Activated naive CD4-positive, alpha-beta T cell treated with anti-CD3 and anti-CD28 coated beads, Interleukin-2, amount 10 ng/mL, durations not matched to agents 7 days and 5 days (primary cell): ENCODE measurements at regions of chr12 and their contacts with region 1.

Region 1: DNA sequence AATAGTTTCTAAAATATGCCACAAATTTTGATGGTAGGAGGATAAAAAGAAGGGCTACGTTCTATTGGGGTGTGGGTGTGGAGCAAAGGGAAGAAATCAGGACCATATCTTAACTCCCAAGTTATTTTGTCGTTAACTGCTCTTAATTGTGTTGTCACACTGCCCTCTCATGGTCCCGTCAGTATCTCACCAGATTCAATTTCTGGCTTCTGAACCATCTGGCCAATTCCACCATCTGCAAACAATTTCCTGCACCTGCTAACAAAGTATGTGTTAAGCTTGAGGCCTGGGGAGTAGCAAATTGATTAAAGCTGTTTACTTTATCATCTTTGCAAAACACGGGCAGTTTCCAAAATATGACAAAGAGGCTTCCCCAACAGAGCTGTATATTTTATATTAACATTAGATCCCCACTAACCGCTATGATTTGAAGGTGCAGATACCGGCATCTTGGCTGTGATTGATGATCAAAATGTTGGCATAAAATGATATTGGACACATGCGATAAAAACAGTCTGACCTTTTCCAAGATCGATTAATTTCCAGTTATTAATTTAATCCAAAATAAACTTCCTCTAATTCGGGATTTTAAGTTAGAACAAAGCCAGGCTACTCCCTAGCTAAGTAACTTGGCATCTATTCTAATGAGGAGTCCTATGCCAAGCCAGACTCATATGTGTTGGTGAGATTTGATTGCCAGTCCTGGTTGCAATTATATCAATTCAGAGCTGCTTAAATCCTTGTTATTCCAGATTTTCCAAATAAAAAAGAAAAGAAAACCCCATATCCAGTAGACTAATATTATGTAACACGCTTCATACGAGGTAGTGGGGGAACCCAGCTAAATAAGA is 6.9 kb upstream of the DNM1L start:
- DNase-seq: peak; percentile 43
- H3K4me3 Mint-ChIP-seq: no peak overlapping the region
- H3K27ac Mint-ChIP-seq: no peak overlapping the region
- H3K4me1 Mint-ChIP-seq: no peaks in the 10 kb centered on the region
- H3K27me3 Mint-ChIP-seq: peaks cover 4% of the 10 kb centered on the region

Region 2: DNA sequence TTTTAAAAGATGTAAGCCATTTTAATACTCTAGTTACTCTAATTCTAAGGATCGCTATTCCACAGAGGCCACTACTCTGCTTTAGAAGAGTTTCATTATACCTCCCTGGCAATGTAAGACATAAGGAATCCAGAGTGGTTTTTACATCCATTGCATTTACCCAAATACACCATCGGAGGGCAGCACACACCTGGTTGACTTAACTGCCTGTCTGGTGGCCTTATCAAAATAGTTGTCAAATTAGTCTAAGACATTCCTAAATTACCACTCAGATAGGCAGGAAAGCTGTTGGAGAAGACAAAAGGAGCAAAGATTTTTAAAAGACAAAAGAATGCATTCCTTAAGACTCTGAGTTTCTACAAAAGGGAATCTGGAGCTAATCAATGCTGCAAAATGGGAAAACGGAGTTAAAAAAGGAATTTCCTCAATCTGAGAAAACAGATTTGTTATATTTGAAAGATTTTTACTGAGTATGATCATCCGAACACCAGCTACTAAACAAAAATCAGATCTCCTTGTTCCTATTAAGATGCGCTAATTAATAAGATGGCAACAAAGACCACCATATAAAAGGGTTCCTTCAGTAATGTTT is 306.6 kb before region 1 on chr12:
- CTCF ChIA-PET with region 1: interaction called, 13 read pairs
- DNase-seq: peak; percentile 64
- H3K4me3 Mint-ChIP-seq: no peak overlapping the region
- H3K27ac Mint-ChIP-seq: no peak overlapping the region
- H3K4me1 Mint-ChIP-seq: no peaks in the 10 kb centered on the region
- H3K27me3 Mint-ChIP-seq: no peaks in the 10 kb centered on the region

Region 3: GRCh38 chr12:32455607-32456071 is 216.5 kb before region 1 on chr12:
- CTCF ChIA-PET with region 1: interaction called, 84 read pairs
- DNase-seq: no peak
- H3K4me3 Mint-ChIP-seq: no peak overlapping the region
- H3K27ac Mint-ChIP-seq: no peak overlapping the region
- H3K4me1 Mint-ChIP-seq: no peaks in the 10 kb centered on the region
- H3K27me3 Mint-ChIP-seq: peaks cover 8% of the 10 kb centered on the region

Region 4: GRCh38 chr12:32516230-32516629 is 155.9 kb before region 1 on chr12:
- CTCF ChIA-PET with region 1: no interaction called
- DNase-seq: no peak
- H3K4me3 Mint-ChIP-seq: no peak overlapping the region
- H3K27ac Mint-ChIP-seq: no peak overlapping the region
- H3K4me1 Mint-ChIP-seq: no peaks in the 10 kb centered on the region
- H3K27me3 Mint-ChIP-seq: peaks cover 9% of the 10 kb centered on the region

Region 5: DNA sequence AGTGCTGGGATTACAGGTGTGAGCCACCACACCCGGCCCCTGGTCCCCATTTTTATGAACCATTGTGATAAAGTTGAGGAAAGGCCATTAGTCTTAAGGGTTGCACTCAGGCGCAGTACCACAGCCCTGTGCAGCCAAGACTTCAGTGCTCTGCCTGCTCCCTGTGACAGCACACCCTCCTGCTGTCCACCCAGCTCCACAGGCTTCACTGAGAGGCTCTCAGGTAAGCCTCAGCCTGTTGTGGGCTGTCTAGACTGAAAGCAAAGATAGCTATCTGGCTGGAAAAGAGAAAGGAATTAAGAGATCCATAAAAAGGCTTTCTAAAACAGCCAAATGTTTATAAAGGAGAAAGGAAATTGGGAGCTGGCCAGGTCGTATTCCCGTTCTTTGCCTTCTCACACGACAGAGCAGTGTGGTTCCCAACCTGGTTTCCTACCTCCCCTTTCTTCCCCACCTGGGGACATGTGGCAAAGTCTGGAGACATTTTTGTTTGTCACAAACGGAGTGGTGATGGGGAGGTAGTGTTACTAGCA is 12.2 kb before region 1 on chr12:
- CTCF ChIA-PET with region 1: interaction called, 17 read pairs
- DNase-seq: no peak
- H3K4me3 Mint-ChIP-seq: no peak overlapping the region
- H3K27ac Mint-ChIP-seq: no peak overlapping the region
- H3K4me1 Mint-ChIP-seq: peaks cover 8% of the 10 kb centered on the region
- H3K27me3 Mint-ChIP-seq: peaks cover 4% of the 10 kb centered on the region

Region 6: DNA sequence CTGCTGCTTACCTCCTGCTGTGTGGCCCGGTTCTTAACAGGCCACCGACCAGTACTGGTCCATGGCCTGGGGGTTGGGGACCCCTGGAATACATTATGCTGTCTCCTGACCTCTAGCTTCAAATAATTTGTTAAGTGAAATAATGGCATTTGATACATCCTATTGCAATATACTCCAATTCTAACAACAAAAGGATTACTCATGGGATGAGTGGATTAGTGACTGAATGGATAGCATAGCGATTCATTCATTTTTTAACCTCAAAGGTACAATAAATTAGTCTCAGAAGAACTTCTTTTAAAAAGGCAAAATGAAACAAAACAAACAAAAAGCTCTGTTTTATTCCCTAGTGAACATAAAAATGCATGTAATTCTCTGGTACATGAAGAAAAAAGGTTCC is 372.3 kb after region 1 on chr12:
- CTCF ChIA-PET with region 1: no interaction called
- DNase-seq: no peak
- H3K4me3 Mint-ChIP-seq: no peak overlapping the region
- H3K27ac Mint-ChIP-seq: no peak overlapping the region
- H3K4me1 Mint-ChIP-seq: no peaks in the 10 kb centered on the region
- H3K27me3 Mint-ChIP-seq: no peaks in the 10 kb centered on the region